Endothelial cell of umbilical vein (primary cell): ENCODE measurements at regions of chr4 and their contacts with region 1.

Region 1: DNA sequence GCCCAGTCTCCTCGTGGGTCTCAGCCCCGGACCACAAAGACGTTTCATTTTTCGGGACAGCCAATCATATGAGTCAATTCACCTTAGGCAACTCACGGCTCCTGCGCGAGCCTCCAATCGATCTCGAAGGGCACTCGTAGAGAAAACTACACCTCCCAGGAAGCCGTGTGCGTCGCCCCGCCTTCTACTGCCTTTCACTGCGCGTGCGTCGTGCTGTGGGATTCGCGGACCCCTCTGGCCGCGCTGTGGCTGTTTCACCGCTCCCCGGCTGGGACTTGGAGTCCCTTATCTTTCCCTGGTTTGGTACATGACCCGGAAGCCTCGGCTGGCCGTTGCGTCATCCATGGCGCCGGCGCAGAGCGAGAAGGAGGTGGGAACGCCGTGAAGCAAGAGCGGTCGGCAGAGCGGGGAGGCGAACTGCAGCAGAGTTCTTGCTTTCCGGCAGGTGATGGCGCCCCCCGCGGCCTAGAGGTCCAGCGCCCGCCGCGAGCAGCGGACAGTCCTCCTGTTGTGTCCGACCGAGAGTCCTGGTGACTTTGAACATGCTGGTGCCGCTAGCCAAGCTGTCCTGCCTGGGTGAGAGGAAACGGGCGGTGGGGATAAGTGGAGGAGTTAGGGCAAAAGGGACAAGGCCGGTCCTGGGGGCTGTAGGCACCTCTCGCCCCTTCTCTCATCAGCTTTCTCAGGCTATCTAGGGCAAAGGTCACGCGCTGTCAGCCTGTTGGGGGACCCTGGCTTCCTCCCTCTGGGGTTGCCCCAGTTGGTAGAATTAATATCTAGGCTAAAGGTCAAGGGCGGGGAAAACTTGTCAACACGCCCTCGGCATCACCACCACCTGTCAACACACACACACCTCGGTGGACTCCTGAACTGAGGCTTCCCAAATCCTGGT is at the start of gene ETFDH:
- DNase-seq: peak; percentile 100
- H3K4me3 ChIP-seq: peak within 1 kb of the TSS; percentile 83 to 92 (median 84)
- H3K27ac ChIP-seq: peak within 1 kb of the TSS; percentile 71
- H3K4me1 ChIP-seq: peaks cover 11% of the 10 kb centered on the region
- H3K27me3 ChIP-seq: no peaks in the 10 kb centered on the region
- CTCF ChIP-seq: peak; percentile 75 to 80
- POLR2A ChIP-seq: no peak
- total RNA-seq, gene ETFDH: 21.8 and 22.3 TPM in 2 replicates

Region 2: GRCh38 chr4:157043131-157043530 is 1629.0 kb before region 1 on chr4:
- CTCF ChIA-PET with region 1: no interaction called
- POLR2A ChIA-PET with region 1: no interaction called
- dilution Hi-C with region 1: no loop called
- intact Hi-C with region 1: no loop called
- DNase-seq: peak; percentile 20
- H3K4me3 ChIP-seq: no peak overlapping the region
- H3K27ac ChIP-seq: no peak overlapping the region
- H3K4me1 ChIP-seq: no peaks in the 10 kb centered on the region
- H3K27me3 ChIP-seq: no peaks in the 10 kb centered on the region
- CTCF ChIP-seq: no peak
- POLR2A ChIP-seq: no peak

Region 3: GRCh38 chr4:158253350-158253980 is 418.7 kb before region 1 on chr4:
- CTCF ChIA-PET with region 1: no interaction called
- POLR2A ChIA-PET with region 1: no interaction called
- dilution Hi-C with region 1: no loop called
- intact Hi-C with region 1: loop called (anchors 1 kb)
- DNase-seq: peak; percentile 71
- H3K4me3 ChIP-seq: no peak overlapping the region
- H3K27ac ChIP-seq: no peak overlapping the region
- H3K4me1 ChIP-seq: no peaks in the 10 kb centered on the region
- H3K27me3 ChIP-seq: no peaks in the 10 kb centered on the region
- CTCF ChIP-seq: peak; percentile 60
- POLR2A ChIP-seq: no peak

Region 4: GRCh38 chr4:158656439-158656838 is 15.7 kb before region 1 on chr4:
- CTCF ChIA-PET with region 1: interaction called, 5 read pairs
- POLR2A ChIA-PET with region 1: no interaction called
- dilution Hi-C with region 1: no loop called
- intact Hi-C with region 1: loop called (anchors 1 kb)
- DNase-seq: no peak
- H3K4me3 ChIP-seq: no peak overlapping the region
- H3K27ac ChIP-seq: no peak overlapping the region
- H3K4me1 ChIP-seq: peaks cover 2% of the 10 kb centered on the region
- H3K27me3 ChIP-seq: no peaks in the 10 kb centered on the region
- CTCF ChIP-seq: no peak
- POLR2A ChIP-seq: no peak

Region 5: DNA sequence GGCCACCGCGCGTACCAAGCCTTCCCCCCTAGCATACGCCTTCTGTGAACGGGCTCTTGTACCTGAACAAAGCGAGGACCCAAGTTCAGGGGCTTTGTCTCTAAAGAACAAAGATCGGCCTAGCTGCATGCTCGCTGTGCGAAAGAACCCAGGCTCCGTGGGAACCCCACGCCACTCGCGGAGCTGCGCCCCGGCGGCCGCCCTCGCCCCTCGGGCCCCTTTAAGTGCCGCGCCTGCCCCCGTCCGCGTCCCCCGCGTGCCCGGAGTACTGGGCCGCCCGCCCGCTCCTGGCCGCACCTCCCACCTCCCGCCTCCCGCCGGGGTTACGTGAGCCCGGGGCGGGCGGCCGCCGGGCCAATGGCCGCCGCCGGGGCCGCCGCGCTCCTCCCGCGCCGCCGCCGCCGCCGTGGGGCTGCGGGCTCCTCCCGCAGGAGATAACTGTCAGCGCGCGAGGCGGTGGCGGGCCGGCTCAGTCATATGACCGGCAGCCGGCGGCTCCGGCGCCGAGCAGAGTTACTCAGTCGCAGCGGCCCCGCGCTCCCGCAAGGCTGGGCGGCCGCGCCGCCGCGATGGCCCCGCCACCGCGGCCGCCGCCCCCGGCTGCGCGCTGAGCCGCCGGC is 96.5 kb after region 1 on chr4 and contains the start of gene FNIP2:
- CTCF ChIA-PET with region 1: no interaction called
- POLR2A ChIA-PET with region 1: no interaction called
- dilution Hi-C with region 1: no loop called
- intact Hi-C with region 1: loop called (anchors 1 kb)
- DNase-seq: peak; percentile 80
- H3K4me3 ChIP-seq: peak within 1 kb of the TSS; percentile 59 to 80 (median 75)
- H3K27ac ChIP-seq: peak within 1 kb of the TSS; percentile 68
- H3K4me1 ChIP-seq: peaks cover 31% of the 10 kb centered on the region
- H3K27me3 ChIP-seq: no peaks in the 10 kb centered on the region
- CTCF ChIP-seq: no peak
- POLR2A ChIP-seq: peak; percentile 53
- total RNA-seq, gene FNIP2: 13.6 and 14.4 TPM in 2 replicates

Region 6: DNA sequence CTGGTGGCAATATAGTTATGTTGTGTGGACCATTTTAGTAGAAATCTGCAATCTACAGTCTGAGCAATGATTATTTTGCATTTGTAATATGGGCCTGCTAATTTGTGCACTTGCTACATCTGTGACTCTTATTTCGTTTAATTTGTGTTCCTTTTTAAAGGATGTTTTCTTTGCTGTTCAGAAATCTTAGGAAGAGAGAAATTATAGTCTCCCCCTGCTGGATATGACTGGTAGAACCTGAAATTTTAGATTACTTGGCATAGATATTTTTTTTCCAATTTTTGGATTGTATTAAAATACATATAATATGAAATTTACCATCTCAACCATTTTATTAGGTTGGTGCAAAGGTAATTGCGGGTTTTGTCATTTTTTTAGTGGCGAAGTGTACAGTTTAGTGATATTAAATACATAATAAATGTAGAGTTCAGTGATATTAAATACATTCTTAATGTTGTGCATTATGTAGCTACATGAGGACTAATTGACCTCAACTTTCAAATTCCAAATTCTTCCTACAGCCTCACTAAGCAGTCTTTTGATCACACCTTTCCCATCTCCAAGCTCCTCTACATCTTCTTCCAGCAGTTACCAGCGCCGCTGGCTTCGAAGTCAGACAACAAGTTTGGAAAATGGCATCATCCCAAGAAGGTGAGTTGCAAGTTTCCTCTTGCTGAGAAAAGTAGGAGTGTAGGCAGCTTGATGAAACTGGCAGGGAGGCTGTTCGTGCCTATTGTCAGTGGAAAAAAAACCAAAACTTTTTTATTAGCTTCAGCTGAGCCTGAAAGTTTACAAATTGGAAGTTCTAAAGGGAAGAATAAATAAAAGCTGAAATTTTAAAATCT is 178.9 kb after region 1 on chr4:
- CTCF ChIA-PET with region 1: interaction called, 5 read pairs
- POLR2A ChIA-PET with region 1: no interaction called
- dilution Hi-C with region 1: no loop called
- intact Hi-C with region 1: loop called (anchors 5 kb)
- DNase-seq: peak; percentile 66
- H3K4me3 ChIP-seq: no peak overlapping the region
- H3K27ac ChIP-seq: no peak overlapping the region
- H3K4me1 ChIP-seq: no peaks in the 10 kb centered on the region
- H3K27me3 ChIP-seq: no peaks in the 10 kb centered on the region
- CTCF ChIP-seq: peak; percentile 27 to 31
- POLR2A ChIP-seq: no peak

Region 7: DNA sequence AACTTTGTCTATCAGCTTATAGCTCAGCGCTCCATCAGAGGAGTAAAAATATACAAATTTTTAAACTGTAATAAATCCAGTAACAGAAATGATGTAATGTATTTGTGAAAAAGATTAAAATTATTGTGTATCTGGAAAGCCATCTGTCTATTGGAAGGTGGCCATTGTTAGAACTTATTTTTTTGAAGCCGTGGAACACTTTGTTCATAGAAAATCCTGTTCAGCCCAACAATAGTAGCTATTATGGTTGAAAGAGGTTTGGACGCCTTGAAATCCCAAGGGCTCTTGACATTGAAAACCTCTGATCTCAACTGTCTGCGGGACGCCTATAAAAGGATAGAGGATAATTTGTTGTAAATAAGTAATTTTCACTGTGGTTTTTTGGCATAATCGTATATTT is 529.0 kb after region 1 on chr4:
- CTCF ChIA-PET with region 1: no interaction called
- POLR2A ChIA-PET with region 1: no interaction called
- dilution Hi-C with region 1: no loop called
- intact Hi-C with region 1: loop called (anchors 5 kb)
- DNase-seq: peak; percentile 60
- H3K4me3 ChIP-seq: no peak overlapping the region
- H3K27ac ChIP-seq: no peak overlapping the region
- H3K4me1 ChIP-seq: peaks cover 12% of the 10 kb centered on the region
- H3K27me3 ChIP-seq: no peaks in the 10 kb centered on the region
- CTCF ChIP-seq: no peak
- POLR2A ChIP-seq: no peak